ENCODE measurements at regions of chr2 and their contacts with region 1.

Region 1: GRCh38 chr2:144830543-144830942 is 310.6 kb upstream of the ZEB2 start:
- DNase-seq: no peak
- ATAC-seq: no peak
- H3K4me3 Mint-ChIP-seq: no peak overlapping the region
- H3K27ac Mint-ChIP-seq: no peak overlapping the region
- H3K4me1 Mint-ChIP-seq: no peaks in the 10 kb centered on the region
- H3K27me3 Mint-ChIP-seq: no peaks in the 10 kb centered on the region

Region 2: DNA sequence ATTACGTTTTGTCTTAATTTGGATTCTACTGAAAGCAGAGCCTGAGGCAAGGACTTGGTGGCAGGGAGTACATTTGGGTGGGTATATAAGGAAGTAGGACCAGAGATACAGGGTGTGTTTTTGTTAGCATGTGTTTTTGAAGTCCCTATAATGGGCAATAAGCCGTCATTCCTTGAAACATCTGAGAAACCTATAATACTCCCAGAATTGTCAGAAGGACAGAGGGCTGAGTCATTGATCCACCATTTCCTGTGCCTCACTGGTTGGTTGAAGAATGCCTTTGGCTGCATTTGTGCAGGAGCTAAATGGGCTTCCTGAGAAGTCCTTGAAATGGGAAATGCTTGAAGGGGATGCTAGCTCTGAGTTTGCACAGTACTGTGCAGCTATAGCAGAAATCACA is 28.8 kb before region 1 on chr2:
- CTCF ChIA-PET with region 1: no interaction called
- POLR2A ChIA-PET with region 1: no interaction called
- intact Hi-C with region 1: loop called in 1 of 2 experiments (anchors 1 kb)
- DNase-seq: no peak
- ATAC-seq: no peak
- H3K4me3 Mint-ChIP-seq: no peak overlapping the region
- H3K27ac Mint-ChIP-seq: no peak overlapping the region
- H3K4me1 Mint-ChIP-seq: no peaks in the 10 kb centered on the region
- H3K27me3 Mint-ChIP-seq: peaks cover 4% of the 10 kb centered on the region

Measured in activated CD4-positive, alpha-beta T cell treated with anti-CD3 and anti-CD28 coated beads for 36 hours (primary cell).